CD8-positive, alpha-beta T cell (primary cell): ENCODE measurements at regions of chr9 and their contacts with region 1.

Region 1: GRCh38 chr9:133149126-133150107 is 14.3 kb downstream of the GBGT1 start:
- DNase-seq: peak; percentile 61 to 94 (median 81)
- ATAC-seq: peak; percentile 50
- H3K4me3 ChIP-seq: peak overlapping the region; percentile 51 to 63
- H3K4me3 Mint-ChIP-seq: peak overlapping the region; percentile 81
- H3K27ac ChIP-seq: peak overlapping the region; percentile 78 to 91
- H3K27ac Mint-ChIP-seq: peak overlapping the region; percentile 87
- H3K4me1 ChIP-seq: peaks cover 34% of the 10 kb centered on the region
- H3K4me1 Mint-ChIP-seq: peaks cover 35% of the 10 kb centered on the region
- H3K27me3 ChIP-seq: no peaks in the 10 kb centered on the region
- H3K27me3 Mint-ChIP-seq: no peaks in the 10 kb centered on the region
- CTCF ChIP-seq: peak; percentile 60

Region 2: DNA sequence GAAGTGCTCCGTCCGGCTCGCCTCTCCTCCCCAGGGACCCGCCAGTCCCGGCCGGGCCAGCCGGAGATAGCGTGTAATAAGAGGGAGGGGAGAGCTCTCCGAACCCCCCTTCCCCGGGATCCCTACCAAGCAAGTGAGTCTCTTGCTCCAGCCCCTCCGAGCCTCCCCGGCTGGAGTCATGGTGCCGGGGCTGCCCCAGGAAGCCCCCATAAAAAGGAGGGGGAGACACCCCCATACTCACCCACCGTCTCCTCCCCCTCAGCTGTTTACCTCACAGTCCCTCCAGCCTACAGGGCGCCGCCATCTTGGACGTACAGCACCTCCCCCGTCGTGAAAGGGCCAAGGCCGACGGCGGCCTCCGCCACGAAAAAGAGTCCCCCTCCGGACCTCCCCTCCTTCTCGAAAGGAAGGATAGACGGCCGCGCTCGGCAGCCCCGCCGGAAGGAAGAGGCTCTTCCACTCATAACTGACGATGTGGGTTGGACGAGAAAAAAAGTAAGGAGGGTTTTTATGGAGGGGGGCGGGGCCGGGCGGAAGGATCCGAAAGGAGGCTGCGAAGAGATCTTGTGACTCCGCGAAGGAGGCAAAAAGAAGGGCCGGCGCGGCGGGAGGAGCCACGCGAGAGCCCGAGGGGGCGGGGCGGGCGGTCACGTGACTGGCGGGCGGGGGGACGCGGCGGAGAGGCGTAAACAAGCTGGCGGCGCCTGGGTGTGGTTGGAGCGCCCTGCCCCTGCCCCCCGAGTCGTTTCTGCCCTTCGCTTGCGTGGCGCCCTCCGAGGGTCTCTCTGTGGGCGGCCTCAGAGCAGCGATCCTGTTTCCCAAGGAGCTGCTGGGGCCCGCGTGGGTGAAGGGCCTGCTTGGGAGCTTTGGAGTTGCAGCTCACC is 204.9 kb before region 1 on chr9 and contains the start of gene TSC1:
- CTCF ChIA-PET with region 1: no interaction called
- POLR2A ChIA-PET with region 1: no interaction called
- intact Hi-C with region 1: loop called in 1 of 2 experiments (anchors 2 kb)
- DNase-seq: peak; percentile 96 to 99 (median 98)
- ATAC-seq: peak; percentile 83
- H3K4me3 ChIP-seq: peak within 1 kb of the TSS; percentile 98 to 99
- H3K4me3 Mint-ChIP-seq: peak within 1 kb of the TSS; percentile 97
- H3K27ac ChIP-seq: peak within 1 kb of the TSS; percentile 90 to 100
- H3K27ac Mint-ChIP-seq: peak within 1 kb of the TSS; percentile 100
- H3K4me1 ChIP-seq: peaks cover 17% of the 10 kb centered on the region
- H3K4me1 Mint-ChIP-seq: peaks cover 29% of the 10 kb centered on the region
- H3K27me3 ChIP-seq: no peaks in the 10 kb centered on the region
- H3K27me3 Mint-ChIP-seq: no peaks in the 10 kb centered on the region
- CTCF ChIP-seq: no peak
- total RNA-seq, gene TSC1: 45.6 to 51.1 TPM

Region 3: GRCh38 chr9:133023117-133023890 is 126.1 kb before region 1 on chr9:
- CTCF ChIA-PET with region 1: interaction called, 19 read pairs
- POLR2A ChIA-PET with region 1: interaction called, 5 read pairs
- intact Hi-C with region 1: loop called (anchors 1 kb)
- DNase-seq: peak in 5 of 9 experiments; percentile 19 to 53 (median 39)
- ATAC-seq: no peak
- H3K4me3 ChIP-seq: no peak overlapping the region
- H3K4me3 Mint-ChIP-seq: no peak overlapping the region
- H3K27ac ChIP-seq: no peak overlapping the region
- H3K27ac Mint-ChIP-seq: no peak overlapping the region
- H3K4me1 ChIP-seq: peaks cover 4% of the 10 kb centered on the region
- H3K4me1 Mint-ChIP-seq: peaks cover 13% of the 10 kb centered on the region
- H3K27me3 ChIP-seq: no peaks in the 10 kb centered on the region
- H3K27me3 Mint-ChIP-seq: no peaks in the 10 kb centered on the region
- CTCF ChIP-seq: no peak

Region 4: GRCh38 chr9:133042676-133043075 is 106.7 kb before region 1 on chr9:
- CTCF ChIA-PET with region 1: interaction called, 29 read pairs
- POLR2A ChIA-PET with region 1: no interaction called
- intact Hi-C with region 1: loop called in 1 of 2 experiments (anchors 2 kb)
- DNase-seq: no peak
- ATAC-seq: no peak
- H3K4me3 ChIP-seq: no peak overlapping the region
- H3K4me3 Mint-ChIP-seq: no peak overlapping the region
- H3K27ac ChIP-seq: no peak overlapping the region
- H3K27ac Mint-ChIP-seq: no peak overlapping the region
- H3K4me1 ChIP-seq: no peaks in the 10 kb centered on the region
- H3K4me1 Mint-ChIP-seq: peaks cover 12% of the 10 kb centered on the region
- H3K27me3 ChIP-seq: no peaks in the 10 kb centered on the region
- H3K27me3 Mint-ChIP-seq: no peaks in the 10 kb centered on the region
- CTCF ChIP-seq: no peak

Region 5: GRCh38 chr9:133094842-133095393 is 54.5 kb before region 1 on chr9:
- CTCF ChIA-PET with region 1: interaction called, 606 read pairs
- POLR2A ChIA-PET with region 1: interaction called, 4 read pairs
- intact Hi-C with region 1: no loop called
- DNase-seq: no peak
- ATAC-seq: no peak
- H3K4me3 ChIP-seq: no peak overlapping the region
- H3K4me3 Mint-ChIP-seq: no peak overlapping the region
- H3K27ac ChIP-seq: no peak overlapping the region
- H3K27ac Mint-ChIP-seq: peak overlapping the region; percentile 18
- H3K4me1 ChIP-seq: no peaks in the 10 kb centered on the region
- H3K4me1 Mint-ChIP-seq: no peaks in the 10 kb centered on the region
- H3K27me3 ChIP-seq: no peaks in the 10 kb centered on the region
- H3K27me3 Mint-ChIP-seq: no peaks in the 10 kb centered on the region
- CTCF ChIP-seq: no peak

Region 6: DNA sequence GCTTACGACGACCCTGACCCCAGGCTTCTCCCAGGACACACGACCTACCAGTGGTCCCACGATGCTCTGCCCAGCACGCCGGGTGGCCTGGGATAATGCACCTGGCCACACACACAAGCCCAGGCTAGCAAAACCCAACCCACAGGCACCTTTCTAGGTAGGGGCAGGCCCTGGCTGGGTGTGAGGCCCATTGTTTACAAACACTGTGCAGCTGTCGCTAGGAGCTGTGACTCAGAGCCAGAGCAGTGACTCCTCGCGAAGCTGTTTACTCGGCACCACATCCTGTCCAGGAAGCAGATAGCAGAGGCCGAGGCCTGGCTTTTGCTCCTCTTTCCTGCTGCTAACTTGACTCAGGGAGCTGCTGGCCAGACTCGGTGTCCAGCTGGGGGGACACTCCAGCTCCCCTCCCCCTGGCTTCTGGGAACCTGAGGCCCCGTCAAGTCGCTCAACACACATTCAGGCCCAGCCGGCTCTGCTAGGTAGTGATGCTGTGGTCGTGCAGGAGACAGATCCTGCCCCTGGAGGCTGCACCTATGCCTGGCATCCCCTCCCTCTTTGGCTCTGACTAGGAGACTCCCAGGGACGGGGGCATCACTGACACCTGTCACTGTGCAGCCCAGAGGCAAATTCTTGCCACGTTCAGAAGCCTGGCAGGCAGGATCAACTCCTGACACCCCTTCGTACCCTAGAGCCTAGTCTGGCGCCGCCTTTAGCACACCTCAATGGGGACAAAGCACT is 15.6 kb before region 1 on chr9:
- CTCF ChIA-PET with region 1: interaction called, 130 read pairs
- POLR2A ChIA-PET with region 1: interaction called, 41 read pairs
- intact Hi-C with region 1: loop called (anchors 1 kb)
- DNase-seq: peak; percentile 85 to 98 (median 92)
- ATAC-seq: peak; percentile 75
- H3K4me3 ChIP-seq: peak overlapping the region in 1 of 2 experiments; percentile 23
- H3K4me3 Mint-ChIP-seq: peak overlapping the region; percentile 72
- H3K27ac ChIP-seq: peak overlapping the region; percentile 92 to 100
- H3K27ac Mint-ChIP-seq: peak overlapping the region; percentile 99
- H3K4me1 ChIP-seq: peaks cover 67% of the 10 kb centered on the region
- H3K4me1 Mint-ChIP-seq: peaks cover 66% of the 10 kb centered on the region
- H3K27me3 ChIP-seq: no peaks in the 10 kb centered on the region
- H3K27me3 Mint-ChIP-seq: no peaks in the 10 kb centered on the region
- CTCF ChIP-seq: no peak

Region 7: DNA sequence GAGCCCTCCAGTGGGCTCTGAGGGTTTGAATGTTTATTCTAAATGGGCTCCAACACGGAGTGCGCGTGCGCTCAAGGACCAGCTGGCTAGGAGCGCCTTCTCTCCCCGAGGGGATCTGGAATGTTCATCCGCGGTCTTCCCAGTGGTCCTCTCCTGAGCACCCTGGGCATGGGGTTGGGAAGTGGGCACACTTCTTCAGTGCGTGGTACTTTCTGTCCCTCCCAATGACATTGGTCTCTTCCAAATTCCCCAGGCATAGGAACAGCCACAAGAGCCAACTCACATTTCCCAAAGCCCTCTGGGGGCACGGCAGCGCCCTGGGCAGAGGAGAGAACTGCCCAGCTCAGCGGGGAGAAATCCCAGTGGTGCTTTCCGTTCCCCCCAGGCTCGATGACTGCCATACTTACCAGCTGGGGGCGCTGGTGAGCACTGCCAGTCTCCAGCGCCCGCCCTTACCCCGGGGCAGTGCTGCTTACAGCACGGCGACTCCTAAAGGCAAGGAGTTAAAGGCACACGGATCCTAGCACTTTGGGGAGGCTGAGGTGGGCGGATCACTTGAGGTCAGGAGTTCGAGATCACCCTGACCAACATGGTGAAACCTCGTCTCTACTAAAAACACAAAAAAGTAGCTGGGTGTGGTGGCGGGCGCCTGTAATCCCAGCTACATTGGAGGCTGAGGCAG is 89.6 kb after region 1 on chr9:
- CTCF ChIA-PET with region 1: no interaction called
- POLR2A ChIA-PET with region 1: no interaction called
- intact Hi-C with region 1: no loop called
- DNase-seq: peak; percentile 26 to 78 (median 67)
- ATAC-seq: peak; percentile 92
- H3K4me3 ChIP-seq: peak overlapping the region; percentile 36 to 50
- H3K4me3 Mint-ChIP-seq: peak overlapping the region; percentile 76
- H3K27ac ChIP-seq: no peak overlapping the region
- H3K27ac Mint-ChIP-seq: no peak overlapping the region
- H3K4me1 ChIP-seq: peaks cover 17% of the 10 kb centered on the region
- H3K4me1 Mint-ChIP-seq: peaks cover 10% of the 10 kb centered on the region
- H3K27me3 ChIP-seq: peaks cover 0 to 7% of the 10 kb centered on the region in 2 experiments
- H3K27me3 Mint-ChIP-seq: peaks cover 13% of the 10 kb centered on the region
- CTCF ChIP-seq: peak; percentile 72

Region 8: GRCh38 chr9:134067904-134068743 is 918.7 kb after region 1 on chr9 and contains the start of gene BRD3:
- CTCF ChIA-PET with region 1: no interaction called
- POLR2A ChIA-PET with region 1: no interaction called
- intact Hi-C with region 1: loop called in 1 of 2 experiments (anchors 10 kb)
- DNase-seq: peak; percentile 60 to 95 (median 80)
- ATAC-seq: peak; percentile 77
- H3K4me3 ChIP-seq: peak within 1 kb of the TSS; percentile 74 to 89
- H3K4me3 Mint-ChIP-seq: peak within 1 kb of the TSS; percentile 87
- H3K27ac ChIP-seq: peak within 1 kb of the TSS; percentile 87 to 90
- H3K27ac Mint-ChIP-seq: peak within 1 kb of the TSS; percentile 96
- H3K4me1 ChIP-seq: peaks cover 12% of the 10 kb centered on the region
- H3K4me1 Mint-ChIP-seq: peaks cover 32% of the 10 kb centered on the region
- H3K27me3 ChIP-seq: peaks cover 4% of the 10 kb centered on the region in 2 experiments
- H3K27me3 Mint-ChIP-seq: peaks cover 21% of the 10 kb centered on the region
- CTCF ChIP-seq: no peak
- total RNA-seq, gene BRD3: 34.3 to 41.4 TPM